Mammary epithelial cell (primary cell): ENCODE measurements at regions of chr3 and their contacts with region 1.

Region 1: DNA sequence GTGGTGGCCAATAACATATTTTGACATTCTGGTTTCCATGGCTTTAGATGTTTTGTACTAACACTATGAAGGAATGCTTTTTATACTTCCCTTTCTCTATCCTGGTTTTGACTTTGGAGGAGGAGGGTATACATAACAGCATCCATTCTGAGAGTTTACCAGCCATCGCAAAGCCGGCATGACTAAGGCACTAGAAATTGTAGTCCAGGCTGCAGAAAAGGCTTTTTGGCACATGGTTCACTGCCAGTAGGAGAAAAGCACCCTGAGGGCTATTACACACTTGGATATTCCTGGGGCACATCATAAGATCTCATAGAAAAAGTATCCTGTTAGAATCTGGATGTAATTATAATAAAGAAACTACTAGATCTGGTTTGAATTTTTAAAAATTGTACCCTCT is 101.8 kb downstream of the STT3B start:
- DNase-seq: peak; percentile 65
- H3K4me3 ChIP-seq: no peak overlapping the region
- H3K27ac ChIP-seq: no peak overlapping the region
- H3K4me1 ChIP-seq: peaks cover 4% of the 10 kb centered on the region
- H3K27me3 ChIP-seq: no peaks in the 10 kb centered on the region
- CTCF ChIP-seq: no peak

Region 2: DNA sequence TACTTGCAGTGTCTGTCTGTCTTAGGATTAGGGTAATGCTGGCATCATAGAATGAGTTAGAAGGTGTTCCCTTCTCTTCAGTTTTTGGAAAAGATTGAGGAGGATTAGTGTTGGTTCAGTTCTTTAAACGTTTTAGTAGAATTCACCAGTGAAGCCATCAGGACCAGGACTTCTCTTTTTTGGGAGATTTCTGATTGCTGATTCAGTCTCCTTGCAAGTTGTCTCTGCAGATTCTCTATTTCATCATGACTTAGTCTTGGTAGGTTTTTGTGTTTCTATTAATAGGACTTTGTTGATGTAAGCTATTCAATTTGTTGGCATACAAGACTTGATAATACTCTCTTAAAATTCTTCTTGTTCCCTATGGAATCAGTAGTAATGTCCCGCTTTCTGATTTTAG is 52.8 kb before region 1 on chr3:
- CTCF ChIA-PET with region 1: no interaction called
- dilution Hi-C with region 1: no loop called
- in situ Hi-C with region 1: no loop called
- intact Hi-C with region 1: no loop called
- DNase-seq: no peak
- H3K4me3 ChIP-seq: no peak overlapping the region
- H3K27ac ChIP-seq: no peak overlapping the region
- H3K4me1 ChIP-seq: no peaks in the 10 kb centered on the region
- H3K27me3 ChIP-seq: no peaks in the 10 kb centered on the region
- CTCF ChIP-seq: no peak

Region 3: DNA sequence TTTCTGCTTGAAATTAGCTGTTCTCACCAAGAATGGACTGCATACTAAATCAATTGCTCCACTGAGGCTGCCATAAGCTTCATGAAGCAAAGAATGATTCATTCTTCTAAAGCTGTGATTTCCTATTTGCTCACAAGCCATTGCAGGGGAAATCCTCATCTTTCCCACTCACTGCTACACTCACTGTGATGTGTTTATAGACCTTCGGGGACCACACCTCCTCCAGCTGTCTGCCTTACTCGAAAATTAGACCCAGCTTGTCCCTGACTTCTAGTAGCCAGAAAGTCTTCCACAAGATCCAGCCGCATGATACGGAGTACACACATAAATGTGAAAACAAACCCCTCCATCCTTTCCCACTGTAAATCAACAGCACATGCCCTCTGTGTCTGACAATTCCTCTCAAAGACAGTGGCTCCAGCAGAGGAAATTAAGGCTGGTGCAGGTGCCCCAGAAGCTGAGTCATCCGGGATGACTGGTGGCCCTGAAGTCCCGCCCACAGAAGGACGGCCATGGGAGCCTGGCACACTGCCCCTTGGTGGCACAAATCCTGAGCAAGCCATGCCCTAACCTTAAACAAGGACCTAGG is 70.2 kb after region 1 on chr3:
- CTCF ChIA-PET with region 1: no interaction called
- dilution Hi-C with region 1: loop called (anchors 5 kb)
- in situ Hi-C with region 1: no loop called
- intact Hi-C with region 1: no loop called
- DNase-seq: peak; percentile 50
- H3K4me3 ChIP-seq: no peak overlapping the region
- H3K27ac ChIP-seq: no peak overlapping the region
- H3K4me1 ChIP-seq: peaks cover 9% of the 10 kb centered on the region
- H3K27me3 ChIP-seq: no peaks in the 10 kb centered on the region
- CTCF ChIP-seq: peak in 1 of 2 donors; percentile 10

Region 4: GRCh38 chr3:32154205-32154579 is 519.7 kb after region 1 on chr3:
- CTCF ChIA-PET with region 1: interaction called, 12 read pairs
- dilution Hi-C with region 1: no loop called
- in situ Hi-C with region 1: no loop called
- intact Hi-C with region 1: no loop called
- DNase-seq: no peak
- H3K4me3 ChIP-seq: no peak overlapping the region
- H3K27ac ChIP-seq: no peak overlapping the region
- H3K4me1 ChIP-seq: no peaks in the 10 kb centered on the region
- H3K27me3 ChIP-seq: no peaks in the 10 kb centered on the region
- CTCF ChIP-seq: peak in 1 of 2 donors; percentile 40